Right cardiac atrium (tissue), 5 donors: ENCODE measurements at regions of chr11 and their contacts with region 1.

Region 1: GRCh38 chr11:56932572-56933220 is 56.0 kb upstream of the OR5AK2 start:
- DNase-seq: no peak
- ATAC-seq: no peak
- H3K4me3 ChIP-seq: no peak overlapping the region
- H3K27ac ChIP-seq: no peak overlapping the region
- H3K4me1 ChIP-seq: no peaks in the 10 kb centered on the region
- H3K27me3 ChIP-seq: no peaks in the 10 kb centered on the region

Region 2: GRCh38 chr11:56808326-56808725 is 124.4 kb before region 1 on chr11:
- intact Hi-C with region 1: no loop called
- DNase-seq: no peak
- ATAC-seq: no peak
- H3K4me3 ChIP-seq: no peak overlapping the region
- H3K27ac ChIP-seq: no peak overlapping the region
- H3K4me1 ChIP-seq: no peaks in the 10 kb centered on the region
- H3K27me3 ChIP-seq: no peaks in the 10 kb centered on the region

Region 3: DNA sequence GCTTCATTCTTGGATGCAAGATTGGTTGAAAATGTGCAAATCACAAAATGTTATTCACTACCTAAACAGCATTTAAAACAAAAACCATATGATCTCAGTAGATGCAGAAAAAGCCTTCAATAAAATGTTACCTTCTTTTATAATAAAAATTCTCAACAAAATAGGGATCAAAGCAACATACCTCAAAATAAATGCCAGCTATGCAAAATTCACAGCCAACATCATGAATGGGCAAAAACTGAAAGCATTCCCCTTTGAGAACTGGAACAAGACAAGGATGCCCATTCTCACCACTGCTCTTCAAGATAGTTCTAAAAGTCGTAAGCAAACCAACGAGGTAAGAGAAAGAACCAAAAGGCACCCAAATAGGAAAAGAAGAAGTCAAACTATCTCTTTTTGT is 58.0 kb after region 1 on chr11:
- intact Hi-C with region 1: loop called in 1 of 4 experiments (anchors 10 kb)
- DNase-seq: no peak
- ATAC-seq: no peak
- H3K4me3 ChIP-seq: no peak overlapping the region
- H3K27ac ChIP-seq: no peak overlapping the region
- H3K4me1 ChIP-seq: no peaks in the 10 kb centered on the region
- H3K27me3 ChIP-seq: no peaks in the 10 kb centered on the region